Activated CD8-positive, alpha-beta memory T cell treated with anti-CD3 and anti-CD28 coated beads, Interleukin-2, amount 10 ng/mL, durations not matched to agents 7 days and 5 days (primary cell): ENCODE measurements at regions of chr2 and their contacts with region 1.

Region 1: DNA sequence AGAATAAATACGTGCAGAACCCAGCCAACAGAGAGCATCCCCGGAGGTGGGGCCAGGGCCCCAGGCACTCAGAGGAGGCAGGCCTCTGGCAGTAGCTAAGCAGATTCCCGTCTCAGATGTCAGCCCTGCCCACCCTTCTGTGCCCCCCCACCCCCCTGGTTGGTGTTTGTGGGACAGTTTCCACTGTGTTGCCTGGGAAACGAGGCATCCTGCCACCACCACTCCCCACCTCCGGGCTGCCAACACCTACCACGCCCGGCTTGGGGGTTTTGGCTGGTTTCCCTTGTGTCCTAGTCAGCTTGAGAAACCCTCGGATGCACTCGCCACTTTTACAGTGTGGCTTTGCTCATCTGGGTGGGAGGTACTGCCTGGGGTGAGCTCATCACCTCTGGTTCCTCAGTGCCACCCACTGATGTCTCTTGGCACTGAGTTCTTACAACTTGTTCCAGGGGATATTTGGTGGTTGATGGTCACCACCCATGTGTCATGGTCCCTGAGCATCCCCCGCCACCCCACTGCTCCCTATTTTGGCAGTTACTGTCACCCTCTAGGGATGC is 72.4 kb upstream of the YWHAQ start:
- DNase-seq: peak; percentile 96
- ATAC-seq: peak; percentile 94
- H3K4me3 Mint-ChIP-seq: no peak overlapping the region
- H3K27ac Mint-ChIP-seq: peak overlapping the region; percentile 84
- H3K4me1 Mint-ChIP-seq: peaks cover 61% of the 10 kb centered on the region
- H3K27me3 Mint-ChIP-seq: no peaks in the 10 kb centered on the region

Region 2: GRCh38 chr2:9738535-9739496 is 35.7 kb after region 1 on chr2:
- CTCF ChIA-PET with region 1: interaction called, 21 read pairs
- DNase-seq: no peak
- ATAC-seq: peak; percentile 5
- H3K4me3 Mint-ChIP-seq: peak overlapping the region; percentile 47
- H3K27ac Mint-ChIP-seq: peak overlapping the region; percentile 89
- H3K4me1 Mint-ChIP-seq: peaks cover 44% of the 10 kb centered on the region
- H3K27me3 Mint-ChIP-seq: peaks cover 2% of the 10 kb centered on the region

Region 3: DNA sequence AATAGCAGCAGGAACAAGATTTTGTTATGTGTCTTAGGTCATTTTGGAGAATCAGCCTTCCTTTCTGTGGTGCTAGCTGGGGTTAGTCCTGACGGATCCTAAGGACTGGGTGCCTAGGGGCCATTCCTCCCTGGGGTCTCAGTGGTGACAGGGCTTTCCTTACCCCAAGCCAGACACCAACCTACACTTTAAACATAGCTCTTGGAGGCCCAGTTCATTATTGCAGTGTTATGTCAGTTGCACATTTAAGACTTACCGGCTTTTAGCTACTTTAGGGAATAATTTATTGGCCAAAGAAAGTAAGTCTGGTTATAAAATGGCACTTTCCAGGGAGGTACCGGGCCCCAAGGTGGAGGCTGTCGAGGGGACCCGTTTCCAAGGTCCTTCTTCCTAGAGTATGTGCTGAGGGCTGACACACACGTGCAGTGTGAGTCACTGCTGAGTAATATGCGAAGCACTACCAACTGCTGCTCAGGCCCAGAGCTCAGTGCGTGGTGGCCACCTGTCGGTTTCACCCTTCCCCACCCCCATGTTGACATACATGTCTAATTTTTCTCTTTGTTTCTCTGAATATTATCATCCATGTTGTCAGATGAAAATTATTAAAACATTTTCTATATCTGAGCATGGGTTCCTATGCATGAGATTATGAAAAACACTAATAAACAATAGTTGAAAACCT is 211.4 kb after region 1 on chr2:
- CTCF ChIA-PET with region 1: no interaction called
- DNase-seq: peak; percentile 82
- ATAC-seq: peak; percentile 100
- H3K4me3 Mint-ChIP-seq: no peak overlapping the region
- H3K27ac Mint-ChIP-seq: no peak overlapping the region
- H3K4me1 Mint-ChIP-seq: peaks cover 13% of the 10 kb centered on the region
- H3K27me3 Mint-ChIP-seq: no peaks in the 10 kb centered on the region